ENCODE measurements at regions of chr20 and their contacts with region 1.

Region 1: DNA sequence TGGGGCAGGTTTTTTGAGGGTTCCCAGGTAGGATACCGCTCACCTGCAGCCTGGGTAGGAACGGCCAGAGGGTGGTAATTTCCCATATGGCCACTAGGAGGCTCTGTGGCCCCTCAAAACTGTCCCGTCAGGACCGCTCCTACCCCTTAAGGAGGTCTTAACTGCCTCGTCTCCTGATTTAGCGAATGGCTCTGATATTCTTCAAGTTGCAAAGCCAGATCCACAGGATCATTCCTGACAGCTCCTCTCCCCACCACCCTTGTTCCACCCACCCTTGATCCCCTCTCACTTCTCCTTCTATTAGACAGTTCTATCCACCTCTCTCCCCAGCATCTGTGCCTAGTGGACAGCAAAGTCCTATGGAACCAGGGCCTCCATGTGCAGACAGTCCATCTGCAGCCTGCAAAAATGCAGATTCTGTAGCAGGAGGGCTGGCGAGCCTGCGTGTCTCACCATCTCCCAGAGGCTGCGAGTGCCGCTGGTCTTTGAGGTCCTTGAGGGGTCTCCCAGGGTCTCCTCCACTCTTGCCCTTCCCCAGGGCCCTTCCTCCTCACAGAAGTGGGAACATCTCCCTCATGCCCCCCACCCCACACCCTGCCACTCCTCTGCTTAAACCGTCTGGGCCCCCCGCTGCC is 34.3 kb upstream of the ZBP1 start:
- DNase-seq: peak; percentile 52 to 55
- H3K4me3 ChIP-seq: no peak overlapping the region
- H3K27ac ChIP-seq: no peak overlapping the region
- H3K4me1 ChIP-seq: no peaks in the 10 kb centered on the region
- H3K27me3 ChIP-seq: no peaks in the 10 kb centered on the region
- CTCF ChIP-seq: peak; percentile 77 to 93 (median 88)
- POLR2A ChIP-seq: no peak

Region 2: DNA sequence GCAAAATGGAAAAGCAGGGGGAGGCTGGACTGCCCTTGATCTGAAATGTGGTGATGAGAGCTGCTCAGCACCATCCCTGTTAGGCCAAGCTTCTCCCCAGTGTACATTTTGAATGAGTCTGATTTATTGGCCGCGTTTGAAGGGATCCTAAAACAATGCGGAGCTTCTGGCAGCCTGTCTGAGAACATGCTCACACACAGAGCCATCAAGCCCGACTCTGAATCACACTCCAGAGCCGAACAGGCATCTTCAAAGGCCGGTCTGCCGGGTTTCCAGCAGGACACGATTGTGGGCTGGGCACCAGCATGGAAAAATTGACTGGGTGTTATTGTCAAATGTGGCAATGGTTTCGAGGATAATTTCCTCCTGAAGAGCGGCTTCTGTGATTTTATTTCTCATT is 789.4 kb before region 1 on chr20:
- intact Hi-C with region 1: no loop called
- DNase-seq: no peak
- H3K4me3 ChIP-seq: no peak overlapping the region
- H3K27ac ChIP-seq: no peak overlapping the region
- H3K4me1 ChIP-seq: no peaks in the 10 kb centered on the region
- H3K27me3 ChIP-seq: no peaks in the 10 kb centered on the region
- CTCF ChIP-seq: no peak
- POLR2A ChIP-seq: no peak

Region 3: GRCh38 chr20:58087193-58087858 is 432.8 kb after region 1 on chr20:
- intact Hi-C with region 1: loop called (anchors 10 kb)
- DNase-seq: peak; percentile 5 to 10
- H3K4me3 ChIP-seq: no peak overlapping the region
- H3K27ac ChIP-seq: no peak overlapping the region
- H3K4me1 ChIP-seq: no peaks in the 10 kb centered on the region
- H3K27me3 ChIP-seq: no peaks in the 10 kb centered on the region
- CTCF ChIP-seq: peak; percentile 30 to 70 (median 44)
- POLR2A ChIP-seq: no peak

Region 4: DNA sequence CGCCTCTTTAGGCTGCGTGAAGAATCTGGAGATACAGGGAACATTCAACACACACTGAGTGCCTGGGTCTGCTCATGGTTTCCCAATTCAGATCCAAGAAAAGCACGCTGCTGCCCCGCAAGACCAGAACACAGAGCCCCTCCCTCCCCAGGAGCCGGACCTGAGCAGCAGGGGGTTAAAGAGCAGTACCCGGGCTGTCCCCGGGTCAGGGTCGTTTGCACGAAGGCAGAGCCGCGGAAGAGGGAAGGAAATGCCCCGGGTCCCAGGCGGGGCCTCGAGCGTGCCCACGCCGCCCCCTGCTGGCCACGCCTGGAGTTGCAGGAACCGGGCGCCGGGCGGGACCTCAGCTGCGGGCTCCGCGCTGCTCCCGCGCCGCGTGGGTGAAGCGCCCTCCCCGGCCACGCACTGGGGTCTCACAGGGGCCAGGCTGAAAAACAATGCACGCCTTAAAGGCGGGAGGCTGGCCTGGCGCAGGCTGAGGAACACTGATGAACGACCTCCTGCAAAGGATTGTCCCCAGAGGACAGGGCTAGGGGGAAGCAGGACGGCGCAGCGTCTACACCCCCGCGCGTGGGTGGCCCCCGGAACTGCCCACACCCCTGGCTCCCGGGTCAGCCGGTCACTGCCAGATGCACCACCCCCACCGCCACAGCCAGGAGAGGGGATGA is 525.1 kb after region 1 on chr20:
- intact Hi-C with region 1: loop called (anchors 2 kb)
- DNase-seq: peak; percentile 21 to 23
- H3K4me3 ChIP-seq: no peak overlapping the region
- H3K27ac ChIP-seq: no peak overlapping the region
- H3K4me1 ChIP-seq: peaks cover 0 to 8% of the 10 kb centered on the region in 2 donors
- H3K27me3 ChIP-seq: no peaks in the 10 kb centered on the region
- CTCF ChIP-seq: peak; percentile 56 to 98 (median 88)
- POLR2A ChIP-seq: no peak

Measured in thyroid gland (tissue), 4 donors.